Thyroid gland (tissue), 4 donors: ENCODE measurements at regions of chr14 and their contacts with region 1.

Region 1: GRCh38 chr14:71138448-71139293 is 231.4 kb downstream of the PCNX1 start:
- DNase-seq: peak; percentile 37 to 40
- H3K4me3 ChIP-seq: no peak overlapping the region
- H3K27ac ChIP-seq: no peak overlapping the region
- H3K4me1 ChIP-seq: no peaks in the 10 kb centered on the region
- H3K27me3 ChIP-seq: no peaks in the 10 kb centered on the region
- CTCF ChIP-seq: peak; percentile 81 to 94 (median 86)
- POLR2A ChIP-seq: no peak

Region 2: DNA sequence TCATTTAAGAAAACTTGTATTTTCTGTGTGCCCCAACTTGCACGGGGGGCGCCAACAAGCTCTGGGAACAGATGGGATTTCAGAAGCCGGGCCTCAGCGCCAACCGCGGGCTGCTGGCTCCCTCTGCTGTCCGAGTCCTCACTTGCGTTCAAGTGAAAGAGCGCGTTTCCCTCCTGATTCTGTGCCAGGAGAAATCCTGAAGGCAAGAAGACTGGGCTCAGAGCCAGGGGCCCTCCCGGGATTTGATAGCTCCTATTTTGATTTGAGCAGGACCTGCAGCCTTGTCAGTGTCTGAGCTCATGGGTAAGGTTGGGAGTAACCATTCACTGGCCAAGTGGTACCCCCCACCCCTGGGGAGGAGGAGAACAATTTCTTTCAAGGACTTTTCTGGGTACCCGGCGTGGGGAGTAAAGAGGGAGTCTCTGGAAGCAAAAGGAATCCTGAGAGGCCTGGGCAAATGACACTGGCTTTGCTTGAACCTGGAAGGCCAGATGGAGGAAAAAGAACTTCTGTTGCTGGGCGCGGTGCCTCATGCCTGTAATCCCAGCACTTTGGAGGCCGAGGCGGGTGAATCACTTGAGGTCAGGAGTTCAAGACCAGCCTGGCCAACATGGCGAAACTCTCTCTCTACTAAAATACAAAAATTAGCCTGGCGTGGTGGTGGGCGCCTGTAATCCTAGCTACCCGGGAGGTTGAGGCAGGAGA is 614.6 kb after region 1 on chr14:
- intact Hi-C with region 1: loop called (anchors 2 kb)
- DNase-seq: peak; percentile 94
- H3K4me3 ChIP-seq: no peak overlapping the region
- H3K27ac ChIP-seq: no peak overlapping the region
- H3K4me1 ChIP-seq: peaks cover 0 to 2% of the 10 kb centered on the region in 2 donors
- H3K27me3 ChIP-seq: no peaks in the 10 kb centered on the region
- CTCF ChIP-seq: peak; percentile 69 to 98 (median 94)
- POLR2A ChIP-seq: no peak